ENCODE measurements at regions of chr2 and their contacts with region 1.

Region 1: DNA sequence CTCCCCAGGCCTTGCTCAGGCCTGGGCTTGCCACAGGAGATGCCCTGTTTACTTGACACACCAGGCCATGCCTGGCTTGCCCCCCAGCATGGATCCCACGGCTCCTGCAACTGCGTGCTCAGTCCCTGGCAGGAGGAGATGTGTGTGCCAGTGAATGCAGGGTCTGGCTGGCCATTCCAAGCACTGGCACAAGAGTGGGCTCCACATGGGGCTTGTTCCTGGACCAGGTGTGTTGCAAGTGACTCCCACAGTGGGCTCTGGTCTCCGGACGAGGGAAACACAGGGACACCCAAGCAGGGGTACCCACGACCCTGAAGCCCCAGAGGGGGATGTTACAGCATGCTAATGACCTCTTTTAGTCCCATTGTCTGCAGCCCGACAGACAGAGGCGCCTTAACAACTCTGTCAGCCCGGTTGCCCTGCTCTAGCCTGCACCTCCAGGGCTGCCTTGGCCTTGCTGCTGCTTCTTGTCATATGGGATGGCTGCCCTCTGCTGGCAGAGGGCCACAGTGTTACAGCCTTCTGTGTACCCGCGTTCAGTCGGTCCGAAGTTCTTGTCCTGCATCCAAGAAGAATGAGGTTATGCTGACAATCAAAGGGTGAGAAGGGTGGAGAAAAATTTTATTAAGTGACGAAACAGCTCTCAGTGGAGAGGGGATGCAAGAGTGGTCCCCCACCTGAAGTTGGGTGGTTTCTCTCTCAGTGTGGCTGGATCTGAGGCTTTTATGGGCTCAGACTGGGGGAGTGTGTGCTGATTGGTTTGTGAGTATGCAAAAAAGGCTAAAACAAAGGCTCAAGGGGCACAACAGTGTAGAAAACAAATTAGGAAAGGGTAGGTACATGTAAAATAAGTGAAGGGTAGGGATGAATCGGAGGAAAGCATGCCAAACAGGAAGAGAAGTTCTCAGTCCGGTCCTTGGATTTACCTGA is 180.4 kb downstream of the MBD5 start:
- DNase-seq: peak in 13 of 14 experiments; percentile 11 to 61 (median 26)
- ATAC-seq: peak; percentile 56
- H3K4me3 ChIP-seq: no peak overlapping the region
- H3K4me3 Mint-ChIP-seq: no peak overlapping the region
- H3K27ac ChIP-seq: no peak overlapping the region
- H3K27ac Mint-ChIP-seq: no peak overlapping the region
- H3K4me1 ChIP-seq: no peaks in the 10 kb centered on the region
- H3K4me1 Mint-ChIP-seq: peaks cover 4% of the 10 kb centered on the region
- H3K27me3 ChIP-seq: no peaks in the 10 kb centered on the region
- H3K27me3 Mint-ChIP-seq: no peaks in the 10 kb centered on the region
- CTCF ChIP-seq: peak; percentile 22

Region 2: GRCh38 chr2:147937744-147938349 is 263.5 kb before region 1 on chr2:
- CTCF ChIA-PET with region 1: no interaction called
- POLR2A ChIA-PET with region 1: no interaction called
- intact Hi-C with region 1: loop called in 1 of 2 experiments (anchors 5 kb)
- DNase-seq: peak in 3 of 14 experiments; percentile 35 to 57 (median 43)
- ATAC-seq: peak; percentile 68
- H3K4me3 ChIP-seq: no peak overlapping the region
- H3K4me3 Mint-ChIP-seq: no peak overlapping the region
- H3K27ac ChIP-seq: no peak overlapping the region
- H3K27ac Mint-ChIP-seq: no peak overlapping the region
- H3K4me1 ChIP-seq: no peaks in the 10 kb centered on the region
- H3K4me1 Mint-ChIP-seq: no peaks in the 10 kb centered on the region
- H3K27me3 ChIP-seq: no peaks in the 10 kb centered on the region
- H3K27me3 Mint-ChIP-seq: no peaks in the 10 kb centered on the region
- CTCF ChIP-seq: peak; percentile 97

Region 3: DNA sequence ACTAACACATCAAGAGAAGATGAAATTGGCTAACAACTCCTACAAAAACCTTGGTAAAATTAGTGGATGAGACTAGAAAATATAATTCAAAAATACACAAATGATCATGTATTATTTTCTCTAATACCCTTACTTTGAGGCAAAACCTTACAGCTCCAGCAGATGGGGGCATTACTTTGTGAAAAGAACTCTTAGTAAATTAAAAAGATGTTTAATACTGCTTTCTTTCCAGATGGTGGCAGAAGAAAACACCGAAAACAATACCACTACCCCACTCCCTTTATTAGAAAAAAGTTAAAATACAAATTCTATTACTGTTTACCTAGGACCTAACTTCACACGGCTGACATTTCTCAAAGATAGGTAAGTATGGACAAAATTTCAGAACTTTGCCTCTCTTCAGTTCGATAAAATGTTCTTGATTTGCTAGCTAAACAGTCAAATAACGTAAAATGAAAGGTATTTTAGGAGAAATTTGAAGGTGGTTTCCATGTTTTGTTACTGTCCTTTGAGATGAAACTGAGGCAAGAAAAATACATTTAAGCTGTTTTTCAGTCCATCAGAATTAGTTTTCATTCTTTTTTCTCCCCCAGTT is 211.4 kb before region 1 on chr2:
- CTCF ChIA-PET with region 1: interaction called, 4 read pairs
- POLR2A ChIA-PET with region 1: no interaction called
- intact Hi-C with region 1: loop called (anchors 1 to 5 kb)
- DNase-seq: peak in 7 of 14 experiments; percentile 5 to 73 (median 44)
- ATAC-seq: peak; percentile 95
- H3K4me3 ChIP-seq: no peak overlapping the region
- H3K4me3 Mint-ChIP-seq: no peak overlapping the region
- H3K27ac ChIP-seq: no peak overlapping the region
- H3K27ac Mint-ChIP-seq: peak overlapping the region; percentile 25
- H3K4me1 ChIP-seq: no peaks in the 10 kb centered on the region
- H3K4me1 Mint-ChIP-seq: peaks cover 38% of the 10 kb centered on the region
- H3K27me3 ChIP-seq: no peaks in the 10 kb centered on the region
- H3K27me3 Mint-ChIP-seq: no peaks in the 10 kb centered on the region
- CTCF ChIP-seq: peak; percentile 97

Region 4: GRCh38 chr2:148102641-148103040 is 98.7 kb before region 1 on chr2:
- CTCF ChIA-PET with region 1: no interaction called
- POLR2A ChIA-PET with region 1: no interaction called
- intact Hi-C with region 1: no loop called
- DNase-seq: no peak
- ATAC-seq: no peak
- H3K4me3 ChIP-seq: no peak overlapping the region
- H3K4me3 Mint-ChIP-seq: no peak overlapping the region
- H3K27ac ChIP-seq: no peak overlapping the region
- H3K27ac Mint-ChIP-seq: no peak overlapping the region
- H3K4me1 ChIP-seq: no peaks in the 10 kb centered on the region
- H3K4me1 Mint-ChIP-seq: no peaks in the 10 kb centered on the region
- H3K27me3 ChIP-seq: no peaks in the 10 kb centered on the region
- H3K27me3 Mint-ChIP-seq: no peaks in the 10 kb centered on the region
- CTCF ChIP-seq: no peak

Region 5: DNA sequence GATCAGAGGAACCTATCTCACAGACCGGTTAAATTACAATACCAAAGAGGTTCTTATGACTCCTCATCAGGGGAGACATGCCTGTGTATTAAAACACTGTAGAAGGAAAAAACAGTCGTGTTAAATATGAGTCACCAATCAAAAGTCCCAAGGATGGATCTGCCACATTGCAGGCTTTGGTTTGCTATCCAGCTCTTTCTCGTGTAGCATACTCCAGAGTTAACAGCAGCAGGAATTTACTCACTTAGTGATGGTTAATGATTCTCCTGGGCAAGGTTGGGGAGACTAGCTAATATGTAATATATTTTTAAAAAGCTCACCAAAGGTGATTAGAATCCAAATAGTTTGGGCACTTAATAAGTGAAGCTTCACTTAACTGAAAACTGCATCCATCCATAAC is 70.8 kb before region 1 on chr2:
- CTCF ChIA-PET with region 1: no interaction called
- POLR2A ChIA-PET with region 1: no interaction called
- intact Hi-C with region 1: no loop called
- DNase-seq: no peak
- ATAC-seq: no peak
- H3K4me3 ChIP-seq: no peak overlapping the region
- H3K4me3 Mint-ChIP-seq: no peak overlapping the region
- H3K27ac ChIP-seq: no peak overlapping the region
- H3K27ac Mint-ChIP-seq: no peak overlapping the region
- H3K4me1 ChIP-seq: no peaks in the 10 kb centered on the region
- H3K4me1 Mint-ChIP-seq: peaks cover 11% of the 10 kb centered on the region
- H3K27me3 ChIP-seq: no peaks in the 10 kb centered on the region
- H3K27me3 Mint-ChIP-seq: no peaks in the 10 kb centered on the region
- CTCF ChIP-seq: no peak